ENCODE measurements at regions of chr12 and their contacts with region 1.

Region 1: GRCh38 chr12:47032644-47033043 is 46.8 kb upstream of the PCED1B start:
- DNase-seq: peak; percentile 61 to 83 (median 78)
- H3K4me3 ChIP-seq: no peak overlapping the region
- H3K27ac ChIP-seq: no peak overlapping the region
- H3K4me1 ChIP-seq: peaks cover 0 to 4% (median 1%) of the 10 kb centered on the region in 4 experiments
- H3K27me3 ChIP-seq: no peaks in the 10 kb centered on the region

Region 2: DNA sequence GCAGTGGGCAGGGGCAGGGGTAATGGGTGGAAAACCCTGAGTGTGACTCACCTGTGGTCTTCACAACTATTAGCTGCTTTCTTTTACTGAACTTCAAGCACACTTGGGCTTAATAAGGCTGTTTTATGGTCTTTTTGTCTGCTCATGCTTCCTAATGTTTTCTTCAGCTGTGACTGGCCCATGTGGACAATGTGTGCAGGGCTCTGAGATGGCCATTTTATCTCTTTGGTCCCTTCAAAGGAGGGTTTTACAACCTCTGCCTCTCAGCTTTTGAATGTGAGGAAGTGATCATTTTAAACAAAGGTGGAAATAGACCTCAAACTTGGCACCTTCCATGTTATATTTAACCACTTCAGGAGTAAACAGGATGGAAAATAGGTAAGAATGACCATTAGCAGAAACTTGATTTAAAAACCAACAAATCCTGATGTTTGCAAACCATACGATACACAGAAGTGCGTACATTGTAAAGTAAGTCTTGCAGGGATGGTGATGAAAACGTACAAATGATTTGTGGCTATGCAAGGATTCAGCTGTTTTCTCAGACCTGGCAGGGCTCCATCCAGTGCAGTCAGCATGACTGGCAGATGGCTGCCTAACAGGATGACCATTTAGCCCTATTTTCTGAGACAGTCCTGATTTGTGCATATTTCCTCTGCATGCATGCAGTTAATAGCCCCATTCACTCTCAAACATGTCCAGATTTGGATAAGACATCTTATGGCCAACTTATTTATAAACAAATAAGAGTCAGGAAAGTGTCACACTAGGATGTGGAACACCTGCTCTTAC is 310.1 kb before region 1 on chr12:
- CTCF ChIA-PET with region 1: no interaction called
- POLR2A ChIA-PET with region 1: no interaction called
- DNase-seq: no peak
- H3K4me3 ChIP-seq: no peak overlapping the region
- H3K27ac ChIP-seq: no peak overlapping the region
- H3K4me1 ChIP-seq: no peaks in the 10 kb centered on the region
- H3K27me3 ChIP-seq: no peaks in the 10 kb centered on the region

Region 3: DNA sequence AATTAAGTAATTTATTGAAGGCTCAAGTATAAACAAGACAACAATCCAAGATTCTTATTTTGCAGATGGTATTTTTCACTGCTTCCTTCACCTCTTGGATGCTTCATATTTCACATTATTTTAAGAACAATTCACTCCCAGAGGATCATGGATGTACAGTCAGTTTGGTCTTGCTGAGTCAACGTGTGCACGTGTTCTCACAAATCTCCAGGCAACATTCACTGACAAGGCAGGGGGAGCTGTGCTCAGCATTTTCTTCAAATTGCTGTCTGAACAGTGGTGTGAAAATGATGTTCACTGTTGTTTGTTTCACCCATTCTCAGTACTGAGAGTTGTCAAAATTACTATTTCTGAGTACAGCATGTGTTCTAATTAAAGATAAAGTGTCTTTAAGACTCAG is 88.6 kb before region 1 on chr12:
- CTCF ChIA-PET with region 1: no interaction called
- POLR2A ChIA-PET with region 1: no interaction called
- DNase-seq: peak in 2 of 3 donors; percentile 20 to 36
- H3K4me3 ChIP-seq: no peak overlapping the region
- H3K27ac ChIP-seq: no peak overlapping the region
- H3K4me1 ChIP-seq: peaks cover 0 to 4% (median 0%) of the 10 kb centered on the region in 4 experiments
- H3K27me3 ChIP-seq: no peaks in the 10 kb centered on the region

Region 4: DNA sequence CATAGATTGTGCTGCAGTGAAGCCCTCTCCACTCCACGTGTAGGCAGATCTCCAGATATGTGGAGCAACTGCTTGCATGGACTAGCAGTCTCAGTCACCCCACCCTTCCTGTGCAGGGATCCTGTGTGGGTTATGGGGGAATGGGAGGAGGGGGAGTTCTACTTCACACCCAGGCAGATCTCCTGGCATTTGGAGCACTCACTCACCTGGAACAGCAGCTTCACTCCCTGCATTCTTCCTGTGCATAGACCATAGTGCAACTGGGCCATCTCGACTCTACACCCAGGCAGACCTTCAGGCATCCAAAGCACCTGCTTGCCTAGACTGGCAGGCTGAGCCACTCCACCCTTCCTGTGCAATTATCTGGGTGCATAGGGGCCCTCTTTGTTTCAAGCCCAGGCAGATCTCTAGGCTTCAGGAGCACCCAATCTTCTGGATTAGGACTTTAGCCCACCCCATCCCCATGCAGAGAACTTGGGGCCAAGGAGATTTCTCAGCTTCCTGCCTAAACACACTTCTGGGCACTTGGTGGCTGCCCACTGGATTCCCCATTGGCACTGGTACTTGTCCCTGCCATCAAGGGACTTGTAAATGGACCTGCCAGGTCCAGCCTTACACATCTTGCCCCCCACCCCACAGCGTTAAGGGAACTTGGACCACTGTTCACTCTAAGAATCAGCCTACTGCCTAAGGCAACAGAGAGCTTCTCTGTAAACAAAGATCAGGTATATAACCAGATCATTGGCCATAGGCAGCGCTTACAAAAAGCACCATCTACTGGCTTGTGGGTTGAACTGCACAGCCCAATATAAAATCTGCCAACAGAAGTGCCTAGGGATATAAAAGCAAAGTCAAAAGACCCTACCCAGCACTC is 49.0 kb before region 1 on chr12:
- CTCF ChIA-PET with region 1: no interaction called
- POLR2A ChIA-PET with region 1: no interaction called
- DNase-seq: peak; percentile 40 to 65 (median 62)
- H3K4me3 ChIP-seq: no peak overlapping the region
- H3K27ac ChIP-seq: no peak overlapping the region
- H3K4me1 ChIP-seq: no peaks in the 10 kb centered on the region
- H3K27me3 ChIP-seq: no peaks in the 10 kb centered on the region

Region 5: GRCh38 chr12:47021298-47021697 is 11.3 kb before region 1 on chr12:
- CTCF ChIA-PET with region 1: interaction called, 23 read pairs
- POLR2A ChIA-PET with region 1: no interaction called
- DNase-seq: peak; percentile 43 to 74 (median 71)
- H3K4me3 ChIP-seq: no peak overlapping the region
- H3K27ac ChIP-seq: no peak overlapping the region
- H3K4me1 ChIP-seq: no peaks in the 10 kb centered on the region
- H3K27me3 ChIP-seq: no peaks in the 10 kb centered on the region

Region 6: GRCh38 chr12:47071241-47071852 is 38.7 kb after region 1 on chr12:
- CTCF ChIA-PET with region 1: interaction called, 28 read pairs
- POLR2A ChIA-PET with region 1: no interaction called
- DNase-seq: peak; percentile 20 to 50 (median 47)
- H3K4me3 ChIP-seq: no peak overlapping the region
- H3K27ac ChIP-seq: no peak overlapping the region
- H3K4me1 ChIP-seq: no peaks in the 10 kb centered on the region
- H3K27me3 ChIP-seq: peaks cover 0 to 1% (median 0%) of the 10 kb centered on the region in 5 experiments

Region 7: DNA sequence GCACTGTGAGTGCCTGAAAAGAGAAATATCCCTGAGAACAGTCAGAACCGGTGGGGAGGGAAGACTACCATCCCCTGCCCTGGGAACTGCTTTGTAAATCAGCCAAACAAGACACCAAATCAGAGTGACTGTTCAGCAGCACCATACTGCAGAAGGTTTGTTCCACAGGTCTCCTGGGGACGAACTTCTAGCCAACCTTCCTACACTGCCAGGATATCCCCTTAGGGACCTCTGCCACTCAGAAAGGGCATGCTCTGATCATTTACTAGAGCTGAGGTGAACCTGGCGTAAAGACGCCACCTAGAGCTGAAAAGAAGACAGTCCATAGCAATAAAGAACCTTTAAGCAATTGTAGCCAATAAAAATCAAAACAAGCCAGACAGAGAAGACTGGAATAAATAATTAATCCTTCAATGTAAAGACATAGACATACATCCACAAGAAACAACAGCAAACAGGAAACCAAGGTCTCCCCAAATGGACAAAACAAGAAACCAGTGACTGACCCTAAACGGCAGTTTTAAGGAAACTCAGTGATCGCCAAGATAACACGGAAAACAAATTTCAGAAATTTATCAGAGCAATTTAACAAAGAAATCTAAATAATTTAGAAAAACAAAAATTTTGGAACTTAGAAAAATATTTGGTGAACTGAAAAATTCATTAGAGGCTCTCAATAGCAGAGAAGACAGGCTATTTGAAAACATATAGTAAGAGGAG is 275.2 kb after region 1 on chr12:
- CTCF ChIA-PET with region 1: interaction called, 12 read pairs
- POLR2A ChIA-PET with region 1: no interaction called
- DNase-seq: peak; percentile 80 to 88 (median 87)
- H3K4me3 ChIP-seq: peak overlapping the region in 6 of 7 experiments; percentile 30 to 71 (median 53)
- H3K27ac ChIP-seq: no peak overlapping the region
- H3K4me1 ChIP-seq: peaks cover 0 to 12% (median 10%) of the 10 kb centered on the region in 4 experiments
- H3K27me3 ChIP-seq: no peaks in the 10 kb centered on the region

Region 8: GRCh38 chr12:47397664-47398281 is 365.1 kb after region 1 on chr12:
- CTCF ChIA-PET with region 1: interaction called, 29 read pairs
- POLR2A ChIA-PET with region 1: no interaction called
- DNase-seq: peak; percentile 39 to 70 (median 62)
- H3K4me3 ChIP-seq: no peak overlapping the region
- H3K27ac ChIP-seq: no peak overlapping the region
- H3K4me1 ChIP-seq: peaks cover 4 to 20% (median 7%) of the 10 kb centered on the region in 4 experiments
- H3K27me3 ChIP-seq: no peaks in the 10 kb centered on the region

Region 9: DNA sequence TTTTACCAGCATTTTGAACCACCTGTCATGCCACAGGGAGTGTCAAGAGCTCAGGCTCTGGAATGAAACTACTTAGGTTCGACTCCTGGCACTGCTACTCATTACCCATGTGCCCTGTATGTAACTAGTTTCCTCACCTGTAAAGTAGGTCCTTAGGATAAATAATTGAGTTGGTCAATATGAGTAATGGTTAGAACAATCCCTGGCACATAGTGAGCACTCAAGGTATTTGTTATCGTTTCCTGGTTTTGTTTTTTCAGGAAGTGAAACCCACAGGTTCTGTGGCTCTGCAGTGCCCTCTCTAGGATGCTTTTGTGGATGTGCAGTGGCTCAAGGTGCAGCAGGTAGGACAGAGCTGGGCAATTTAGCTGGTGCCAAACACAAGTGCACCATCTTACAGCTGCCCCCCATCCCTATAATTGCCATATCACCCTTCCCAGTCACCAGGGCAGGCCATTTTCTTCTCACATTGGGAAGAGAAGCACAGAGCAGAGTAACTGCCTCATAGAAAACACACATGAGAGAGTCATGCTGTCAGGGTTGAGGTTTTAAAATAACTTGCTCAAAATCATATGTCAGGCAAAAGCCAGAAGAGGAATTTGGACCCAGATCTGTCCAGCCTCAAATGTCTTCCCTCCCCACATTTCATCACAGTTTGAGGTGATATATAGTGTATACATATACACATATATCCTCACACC is 375.7 kb after region 1 on chr12:
- CTCF ChIA-PET with region 1: interaction called, 14 read pairs
- POLR2A ChIA-PET with region 1: no interaction called
- DNase-seq: peak; percentile 32 to 60 (median 53)
- H3K4me3 ChIP-seq: no peak overlapping the region
- H3K27ac ChIP-seq: no peak overlapping the region
- H3K4me1 ChIP-seq: peaks cover 0 to 15% (median 0%) of the 10 kb centered on the region in 4 experiments
- H3K27me3 ChIP-seq: no peaks in the 10 kb centered on the region

Region 10: GRCh38 chr12:47686645-47687240 is 654.1 kb after region 1 on chr12:
- CTCF ChIA-PET with region 1: interaction called, 44 read pairs
- POLR2A ChIA-PET with region 1: no interaction called
- DNase-seq: peak; percentile 49 to 76 (median 71)
- H3K4me3 ChIP-seq: no peak overlapping the region
- H3K27ac ChIP-seq: no peak overlapping the region
- H3K4me1 ChIP-seq: no peaks in the 10 kb centered on the region
- H3K27me3 ChIP-seq: no peaks in the 10 kb centered on the region